ENCODE measurements at regions of chr19 and their contacts with region 1.

Region 1: DNA sequence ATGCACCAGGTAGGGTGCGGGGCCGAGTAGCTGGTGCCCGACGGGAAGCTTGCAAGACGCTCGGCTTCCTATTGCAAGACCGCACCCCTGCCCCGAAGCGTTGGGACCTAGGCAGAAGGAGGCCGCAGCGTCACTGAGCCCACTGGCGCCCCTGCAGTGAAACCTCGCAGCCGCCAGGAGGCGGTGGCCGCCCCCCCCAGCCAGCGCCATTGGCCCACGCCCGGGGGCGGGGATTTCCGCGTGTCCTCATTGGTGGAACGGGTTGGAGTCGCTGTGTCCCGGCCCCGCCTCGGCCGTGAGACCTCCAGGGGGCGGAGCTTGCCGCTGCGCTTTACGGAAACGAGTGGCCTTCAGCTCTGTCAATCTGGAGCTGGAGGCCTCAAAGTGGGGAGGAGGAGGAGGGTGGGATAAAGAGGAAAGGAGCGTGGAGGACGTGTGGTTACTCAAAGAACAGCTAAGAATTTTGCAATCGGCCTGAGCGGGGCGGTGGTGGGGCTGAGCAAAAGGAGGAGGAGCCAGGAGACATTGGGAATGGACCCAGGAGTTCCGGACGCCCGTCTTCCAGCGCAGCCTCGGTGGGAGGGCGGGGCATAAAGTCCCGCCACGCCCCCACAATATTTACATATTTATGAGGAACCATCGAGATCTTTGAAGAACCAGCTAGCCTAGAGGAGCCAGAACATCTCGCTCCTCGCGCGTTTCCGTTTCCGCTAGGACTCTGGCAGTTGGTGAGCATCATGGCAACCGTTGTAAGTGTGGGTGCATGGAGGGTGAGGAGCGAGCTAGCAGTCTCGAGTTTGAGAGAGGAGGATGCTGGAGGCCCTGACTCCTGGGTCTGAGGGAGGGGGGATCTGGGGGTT is at the starts of genes GYS1 and RUVBL2:
- DNase-seq: peak; percentile 99
- H3K4me3 Mint-ChIP-seq: peak within 1 kb of the TSS; percentile 96
- H3K27ac Mint-ChIP-seq: peak within 1 kb of the TSS; percentile 93
- H3K4me1 Mint-ChIP-seq: peaks cover 43% of the 10 kb centered on the region
- H3K27me3 Mint-ChIP-seq: no peaks in the 10 kb centered on the region
- total RNA-seq, gene GYS1: 42.2 to 47.6 TPM
- total RNA-seq, gene RUVBL2: 107 to 109 TPM

Region 2: DNA sequence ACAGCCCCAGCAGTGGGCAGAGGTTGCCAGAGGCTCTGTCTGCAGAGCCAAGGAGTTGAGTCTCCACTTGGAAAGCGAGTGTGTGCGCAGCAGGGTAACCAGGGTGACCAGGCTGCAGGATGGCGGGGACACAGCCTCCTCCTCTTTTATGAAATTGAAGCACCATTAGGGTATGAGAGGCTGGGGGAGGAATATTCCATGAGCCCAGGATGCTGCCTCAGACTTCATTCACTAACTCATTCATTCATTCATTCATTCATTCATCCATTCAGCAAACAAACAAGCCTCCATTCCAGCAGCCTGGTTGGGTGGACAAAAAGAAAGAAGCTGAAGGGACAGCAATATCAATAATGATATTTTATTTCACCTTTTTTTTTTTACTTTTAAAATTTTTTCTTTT is 475.2 kb before region 1 on chr19:
- CTCF ChIA-PET with region 1: no interaction called
- POLR2A ChIA-PET with region 1: no interaction called
- intact Hi-C with region 1: no loop called
- DNase-seq: no peak
- H3K4me3 Mint-ChIP-seq: no peak overlapping the region
- H3K27ac Mint-ChIP-seq: no peak overlapping the region
- H3K4me1 Mint-ChIP-seq: peaks cover 6% of the 10 kb centered on the region
- H3K27me3 Mint-ChIP-seq: no peaks in the 10 kb centered on the region

Region 3: DNA sequence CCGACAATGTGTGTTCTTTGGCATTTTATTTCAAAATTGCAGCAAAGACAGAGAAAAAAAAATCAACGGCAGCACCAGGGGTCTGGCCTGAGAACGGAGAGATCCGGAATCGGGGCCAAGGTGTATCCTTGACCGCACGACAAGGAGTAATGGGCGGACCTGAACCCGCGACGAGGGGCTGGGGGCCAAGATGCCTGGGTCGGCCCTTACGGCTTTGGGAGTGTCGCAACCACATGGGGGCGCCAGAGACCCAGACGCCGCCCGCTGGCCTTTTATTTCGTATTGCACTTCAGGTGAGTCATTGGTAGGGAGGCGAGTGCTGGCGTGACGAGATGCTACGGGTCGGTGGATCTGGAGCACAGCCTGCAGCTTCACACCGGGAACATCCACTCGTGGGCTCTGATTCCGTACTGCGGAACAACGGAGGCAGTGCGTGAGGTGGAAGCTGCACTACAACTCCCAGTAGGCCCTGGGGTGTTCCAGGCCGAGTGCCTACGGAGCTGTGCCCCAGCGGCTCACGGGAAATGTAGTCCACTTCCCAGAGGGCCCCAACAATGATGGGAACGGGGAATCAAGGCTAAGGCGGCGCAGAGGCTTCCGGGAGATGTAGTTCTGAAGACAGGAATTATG is 198.2 kb before region 1 on chr19:
- CTCF ChIA-PET with region 1: interaction called, 13 read pairs
- POLR2A ChIA-PET with region 1: interaction called, 3 read pairs
- intact Hi-C with region 1: loop called (anchors 1 kb)
- DNase-seq: peak; percentile 89
- H3K4me3 Mint-ChIP-seq: peak overlapping the region; percentile 89
- H3K27ac Mint-ChIP-seq: peak overlapping the region; percentile 84
- H3K4me1 Mint-ChIP-seq: peaks cover 7% of the 10 kb centered on the region
- H3K27me3 Mint-ChIP-seq: no peaks in the 10 kb centered on the region

Region 4: GRCh38 chr19:48826606-48827020 is 166.8 kb before region 1 on chr19:
- CTCF ChIA-PET with region 1: no interaction called
- POLR2A ChIA-PET with region 1: no interaction called
- intact Hi-C with region 1: no loop called
- DNase-seq: no peak
- H3K4me3 Mint-ChIP-seq: no peak overlapping the region
- H3K27ac Mint-ChIP-seq: no peak overlapping the region
- H3K4me1 Mint-ChIP-seq: no peaks in the 10 kb centered on the region
- H3K27me3 Mint-ChIP-seq: no peaks in the 10 kb centered on the region

Region 5: DNA sequence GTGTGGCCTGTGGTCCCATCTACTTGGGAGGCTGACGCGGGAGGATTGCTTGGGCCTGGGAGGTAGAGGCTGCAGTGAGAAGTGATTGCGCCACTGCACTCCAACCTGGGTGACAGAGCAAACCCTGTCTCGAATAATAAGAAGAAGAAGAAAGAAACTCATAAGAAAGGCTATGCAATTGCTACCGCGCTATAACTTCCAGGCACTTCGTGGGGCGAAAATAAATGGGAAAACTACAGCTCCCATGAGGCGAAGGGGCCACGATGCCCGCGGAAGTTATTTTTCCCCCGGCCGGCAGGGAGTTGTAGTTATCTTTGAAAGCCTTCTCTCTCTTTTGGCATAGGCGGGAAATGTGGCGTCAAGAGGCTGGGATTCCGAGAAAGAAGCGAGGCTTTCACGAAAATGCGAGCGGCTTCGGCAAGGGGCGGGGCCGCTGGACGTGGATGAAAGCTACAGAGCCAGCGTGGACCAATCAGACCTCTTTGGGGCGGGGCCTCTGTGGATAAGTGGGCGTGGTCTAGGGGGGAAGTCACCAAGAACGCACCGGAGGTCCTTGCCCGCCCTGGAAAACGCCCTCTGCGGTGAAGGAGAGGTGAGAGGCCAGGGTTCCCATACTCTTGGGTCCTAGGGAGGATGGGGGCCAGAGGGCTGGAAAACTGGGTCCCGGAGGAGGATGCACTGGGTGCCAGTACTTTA is 93.5 kb before region 1 on chr19 and contains the start of gene NUCB1:
- CTCF ChIA-PET with region 1: interaction called, 14 read pairs
- POLR2A ChIA-PET with region 1: interaction called, 5 read pairs
- intact Hi-C with region 1: no loop called
- DNase-seq: peak; percentile 100
- H3K4me3 Mint-ChIP-seq: peak within 1 kb of the TSS; percentile 96
- H3K27ac Mint-ChIP-seq: peak within 1 kb of the TSS; percentile 97
- H3K4me1 Mint-ChIP-seq: peaks cover 28% of the 10 kb centered on the region
- H3K27me3 Mint-ChIP-seq: peaks cover 7% of the 10 kb centered on the region
- total RNA-seq, gene NUCB1: 154 to 159 TPM

Region 6: GRCh38 chr19:48970923-48971395 is 22.4 kb before region 1 on chr19:
- CTCF ChIA-PET with region 1: interaction called, 25 read pairs
- POLR2A ChIA-PET with region 1: interaction called, 5 read pairs
- intact Hi-C with region 1: no loop called
- DNase-seq: peak; percentile 87
- H3K4me3 Mint-ChIP-seq: no peak overlapping the region
- H3K27ac Mint-ChIP-seq: no peak overlapping the region
- H3K4me1 Mint-ChIP-seq: peaks cover 21% of the 10 kb centered on the region
- H3K27me3 Mint-ChIP-seq: no peaks in the 10 kb centered on the region

Region 7: DNA sequence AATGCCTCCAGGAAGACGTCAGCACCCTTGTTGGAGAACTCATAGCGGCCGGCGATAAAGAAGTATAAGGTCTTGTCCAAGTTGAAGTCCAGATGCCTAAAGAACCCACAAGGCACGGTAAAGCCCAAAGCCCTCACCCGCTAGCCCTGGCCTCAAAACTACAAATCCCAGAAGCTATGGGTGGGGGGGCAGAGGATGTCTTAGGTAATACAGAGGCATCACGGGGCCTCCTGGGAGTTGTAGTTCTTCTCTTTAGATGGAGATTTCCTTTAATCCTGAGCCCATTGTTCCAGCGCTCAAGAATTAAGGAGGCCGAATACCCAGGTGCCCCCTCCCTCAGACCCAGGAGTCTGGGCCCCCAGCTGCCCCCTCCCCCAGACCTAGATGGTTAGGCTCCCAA is 11.1 kb before region 1 on chr19:
- CTCF ChIA-PET with region 1: interaction called, 41 read pairs
- POLR2A ChIA-PET with region 1: interaction called, 4 read pairs
- intact Hi-C with region 1: no loop called
- DNase-seq: no peak
- H3K4me3 Mint-ChIP-seq: no peak overlapping the region
- H3K27ac Mint-ChIP-seq: no peak overlapping the region
- H3K4me1 Mint-ChIP-seq: peaks cover 5% of the 10 kb centered on the region
- H3K27me3 Mint-ChIP-seq: no peaks in the 10 kb centered on the region

Region 8: GRCh38 chr19:49085020-49085867 is 91.8 kb after region 1 on chr19 and contains the start of gene SNRNP70:
- CTCF ChIA-PET with region 1: interaction called, 3 read pairs
- POLR2A ChIA-PET with region 1: no interaction called
- intact Hi-C with region 1: loop called (anchors 10 kb)
- DNase-seq: peak; percentile 99
- H3K4me3 Mint-ChIP-seq: peak within 1 kb of the TSS; percentile 96
- H3K27ac Mint-ChIP-seq: peak within 1 kb of the TSS; percentile 82
- H3K4me1 Mint-ChIP-seq: peaks cover 31% of the 10 kb centered on the region
- H3K27me3 Mint-ChIP-seq: no peaks in the 10 kb centered on the region
- total RNA-seq, gene SNRNP70: 180 to 190 TPM

Region 9: GRCh38 chr19:49413348-49413747 is 419.9 kb after region 1 on chr19:
- CTCF ChIA-PET with region 1: no interaction called
- POLR2A ChIA-PET with region 1: no interaction called
- intact Hi-C with region 1: no loop called
- DNase-seq: no peak
- H3K4me3 Mint-ChIP-seq: no peak overlapping the region
- H3K27ac Mint-ChIP-seq: no peak overlapping the region
- H3K4me1 Mint-ChIP-seq: peaks cover 37% of the 10 kb centered on the region
- H3K27me3 Mint-ChIP-seq: peaks cover 2% of the 10 kb centered on the region

Measured in activated CD4-positive, alpha-beta memory T cell treated with anti-CD3 and anti-CD28 coated beads for 36 hours (primary cell).